ENCODE measurements at regions of chr12 and their contacts with region 1.

Region 1: GRCh38 chr12:52615208-52615868 is 3.0 kb downstream of the KRT73 start:
- DNase-seq: peak in 3 of 9 experiments; percentile 35 to 61 (median 48)
- ATAC-seq: peak; percentile 45
- H3K4me3 ChIP-seq: no peak overlapping the region
- H3K4me3 Mint-ChIP-seq: peak overlapping the region; percentile 53
- H3K27ac ChIP-seq: peak overlapping the region; percentile 58 to 60
- H3K27ac Mint-ChIP-seq: peak overlapping the region; percentile 95
- H3K4me1 ChIP-seq: peaks cover 88% of the 10 kb centered on the region
- H3K4me1 Mint-ChIP-seq: peaks cover 82% of the 10 kb centered on the region
- H3K27me3 ChIP-seq: no peaks in the 10 kb centered on the region
- H3K27me3 Mint-ChIP-seq: no peaks in the 10 kb centered on the region
- CTCF ChIP-seq: no peak

Region 2: GRCh38 chr12:52495389-52495788 is 119.9 kb before region 1 on chr12:
- CTCF ChIA-PET with region 1: no interaction called
- POLR2A ChIA-PET with region 1: no interaction called
- intact Hi-C with region 1: no loop called
- DNase-seq: peak in 1 of 9 experiments; percentile 9
- ATAC-seq: no peak
- H3K4me3 ChIP-seq: no peak overlapping the region
- H3K4me3 Mint-ChIP-seq: no peak overlapping the region
- H3K27ac ChIP-seq: no peak overlapping the region
- H3K27ac Mint-ChIP-seq: no peak overlapping the region
- H3K4me1 ChIP-seq: no peaks in the 10 kb centered on the region
- H3K4me1 Mint-ChIP-seq: no peaks in the 10 kb centered on the region
- H3K27me3 ChIP-seq: no peaks in the 10 kb centered on the region
- H3K27me3 Mint-ChIP-seq: peaks cover 36% of the 10 kb centered on the region
- CTCF ChIP-seq: no peak

Region 3: DNA sequence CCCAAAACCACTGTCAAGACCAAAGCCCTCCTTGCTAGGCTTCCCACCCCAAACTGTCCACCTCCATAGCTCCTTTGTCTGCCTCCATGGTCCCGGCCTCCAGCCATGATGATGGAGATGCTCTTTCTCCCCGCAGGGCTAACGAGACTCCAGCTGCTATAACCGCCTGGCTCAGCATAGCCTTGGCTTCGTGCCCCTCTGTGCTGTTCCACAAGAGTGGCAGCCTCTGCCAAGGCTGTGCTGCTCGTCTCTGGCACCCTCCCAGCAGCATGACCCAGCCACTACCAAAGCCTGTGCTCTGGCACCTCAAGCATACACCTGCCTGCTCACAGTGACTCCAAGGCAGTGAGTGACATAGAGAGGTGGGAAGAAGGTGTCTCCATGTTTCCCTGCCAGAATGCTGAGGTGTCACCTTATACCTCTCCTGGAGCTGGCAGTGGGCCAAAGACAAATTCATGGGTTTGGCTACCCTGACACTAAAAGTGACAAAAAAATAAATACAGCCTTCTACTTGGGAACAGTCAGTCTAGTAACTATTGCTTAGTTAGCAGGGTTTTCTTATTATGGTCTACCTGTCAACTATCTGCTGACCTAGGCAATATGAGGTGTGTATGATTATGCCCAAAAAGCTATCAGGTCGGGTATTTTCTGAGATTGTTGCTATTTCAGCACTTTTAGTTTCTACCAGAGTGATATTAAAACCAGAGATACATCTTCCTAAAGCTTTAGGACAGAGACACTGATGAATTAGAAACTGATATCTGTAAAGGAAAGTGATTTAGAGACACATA is 19.1 kb after region 1 on chr12:
- CTCF ChIA-PET with region 1: interaction called, 11 read pairs
- POLR2A ChIA-PET with region 1: interaction called, 13 read pairs
- intact Hi-C with region 1: no loop called
- DNase-seq: peak in 1 of 9 experiments; percentile 43
- ATAC-seq: no peak
- H3K4me3 ChIP-seq: no peak overlapping the region
- H3K4me3 Mint-ChIP-seq: no peak overlapping the region
- H3K27ac ChIP-seq: no peak overlapping the region
- H3K27ac Mint-ChIP-seq: peak overlapping the region; percentile 19
- H3K4me1 ChIP-seq: peaks cover 59% of the 10 kb centered on the region
- H3K4me1 Mint-ChIP-seq: peaks cover 68% of the 10 kb centered on the region
- H3K27me3 ChIP-seq: no peaks in the 10 kb centered on the region
- H3K27me3 Mint-ChIP-seq: no peaks in the 10 kb centered on the region
- CTCF ChIP-seq: no peak

Region 4: DNA sequence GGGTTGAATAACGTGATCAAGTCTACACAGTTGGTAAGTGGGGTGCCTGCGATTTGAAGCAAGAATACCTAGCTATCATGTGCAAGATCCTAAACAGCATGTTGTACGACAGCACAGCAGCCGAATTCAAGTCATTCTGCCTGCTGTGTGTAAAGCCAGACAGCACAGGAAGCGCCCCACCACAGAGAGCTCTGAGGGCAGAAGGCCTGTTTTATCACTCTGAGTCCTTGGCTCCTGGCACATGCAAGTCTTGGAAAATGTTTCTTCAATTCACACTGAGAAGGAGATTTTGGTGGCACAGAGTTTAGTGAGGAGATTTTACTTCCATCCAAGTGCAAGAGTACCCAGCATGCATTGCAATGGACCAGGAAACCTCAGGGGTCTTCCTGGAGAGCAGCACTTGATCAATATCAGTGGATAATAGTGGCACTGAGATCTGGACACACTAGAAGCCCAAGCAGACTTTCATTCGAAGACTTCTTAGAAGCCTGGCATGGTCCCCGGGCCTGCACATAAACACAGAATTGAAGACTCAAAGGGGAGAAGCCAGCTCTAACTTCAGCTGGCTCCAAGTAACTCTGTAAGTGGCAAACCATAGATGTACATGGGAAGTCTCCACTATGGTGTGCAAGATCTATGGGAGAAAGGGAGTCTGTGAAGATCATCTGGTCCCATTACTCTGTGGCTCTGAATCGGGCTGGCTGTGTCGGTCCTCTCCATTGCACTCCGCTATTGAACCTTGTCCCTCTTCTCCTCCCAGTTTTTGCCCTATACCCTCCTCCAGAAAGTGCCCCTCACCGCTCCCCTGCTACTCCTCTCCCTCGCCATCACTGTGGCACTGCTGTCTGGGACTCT is 66.4 kb after region 1 on chr12:
- CTCF ChIA-PET with region 1: interaction called, 5 read pairs
- POLR2A ChIA-PET with region 1: interaction called, 3 read pairs
- intact Hi-C with region 1: loop called in 1 of 2 experiments (anchors 5 kb)
- DNase-seq: peak; percentile 4 to 79 (median 61)
- ATAC-seq: peak; percentile 98
- H3K4me3 ChIP-seq: no peak overlapping the region
- H3K4me3 Mint-ChIP-seq: peak overlapping the region; percentile 4
- H3K27ac ChIP-seq: no peak overlapping the region
- H3K27ac Mint-ChIP-seq: peak overlapping the region; percentile 84
- H3K4me1 ChIP-seq: peaks cover 32% of the 10 kb centered on the region
- H3K4me1 Mint-ChIP-seq: peaks cover 36% of the 10 kb centered on the region
- H3K27me3 ChIP-seq: no peaks in the 10 kb centered on the region
- H3K27me3 Mint-ChIP-seq: no peaks in the 10 kb centered on the region
- CTCF ChIP-seq: no peak

Measured in CD8-positive, alpha-beta T cell (primary cell).